Activated T-helper 1 cell treated with anti-CD3 and anti-CD28 coated beads, Interleukin-12 subunit alpha, Interleukin-12 subunit beta, Interleukin-2, Interleukin-4 antibody, amounts not matched to agents 30 ng/mL and 10 ng/mL and 1 ng/mL, durations not matched to agents 14 hours and 24 hours and 36 hours (primary cell): ENCODE measurements at regions of chrX and their contacts with region 1.

Region 1: GRCh38 chrX:79081895-79082512 is 62.5 kb upstream of the GPR174 start:
- DNase-seq: peak; percentile 5
- H3K4me3 Mint-ChIP-seq: peak overlapping the region; percentile 59
- H3K27ac Mint-ChIP-seq: peak overlapping the region; percentile 70
- H3K4me1 Mint-ChIP-seq: peaks cover 39% of the 10 kb centered on the region
- H3K27me3 Mint-ChIP-seq: no peaks in the 10 kb centered on the region

Region 2: DNA sequence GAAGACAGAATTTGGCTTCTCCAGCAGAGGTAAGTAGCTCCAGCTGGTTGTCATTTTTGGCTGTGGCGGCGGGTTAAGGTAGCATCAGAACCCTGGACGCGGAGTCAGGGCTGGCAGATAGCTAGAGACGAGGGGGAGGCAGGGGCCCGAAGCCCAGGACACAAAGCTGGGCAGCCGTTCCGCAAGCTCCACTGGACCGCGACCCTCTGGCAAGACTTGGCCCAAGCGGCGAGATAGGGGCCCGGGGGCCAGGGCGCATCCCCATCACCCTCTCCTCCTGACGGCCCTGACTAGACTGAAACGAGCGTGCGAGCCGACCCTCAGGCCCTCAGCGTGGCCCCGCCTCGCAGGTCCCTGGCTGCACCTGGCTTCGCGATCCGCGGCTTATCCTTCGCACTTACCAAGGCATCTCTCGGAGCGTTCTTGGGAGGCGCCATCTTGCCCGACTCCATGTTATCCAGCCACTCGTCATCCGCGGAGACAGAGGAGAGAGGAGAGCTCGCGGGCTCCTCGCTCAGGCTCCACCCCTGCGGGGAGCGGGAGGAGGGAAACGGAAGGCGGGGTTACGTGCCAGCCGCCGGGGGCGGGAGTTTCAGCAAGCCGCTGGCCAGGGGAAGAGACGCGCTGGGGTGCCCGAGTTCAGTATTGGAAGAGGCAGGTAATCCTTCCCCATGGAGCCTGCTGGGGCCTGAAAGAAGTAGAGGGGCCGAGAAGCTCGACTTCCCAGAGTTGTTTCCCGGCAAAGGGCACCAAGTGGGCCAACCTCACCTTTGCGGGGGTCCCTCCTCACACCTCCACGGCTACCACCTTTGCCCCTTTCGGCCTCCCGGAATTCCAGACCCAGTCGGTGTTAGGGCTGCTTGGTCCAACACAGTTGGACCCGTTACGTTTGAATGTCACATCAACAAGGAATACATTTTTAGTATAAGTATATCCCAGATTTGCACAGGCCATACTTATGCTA is 942.6 kb before region 1 on chrX and contains the start of gene TAF9B:
- intact Hi-C with region 1: loop called (anchors 10 kb)
- DNase-seq: peak; percentile 78
- H3K4me3 Mint-ChIP-seq: peak within 1 kb of the TSS; percentile 92
- H3K27ac Mint-ChIP-seq: peak within 1 kb of the TSS; percentile 86
- H3K4me1 Mint-ChIP-seq: no peaks in the 10 kb centered on the region
- H3K27me3 Mint-ChIP-seq: no peaks in the 10 kb centered on the region
- total RNA-seq, gene TAF9B: 14.9 and 15.0 TPM in 2 replicates

Region 3: GRCh38 chrX:78555401-78555980 is 526.5 kb before region 1 on chrX:
- intact Hi-C with region 1: loop called (anchors 1 kb)
- DNase-seq: no peak
- H3K4me3 Mint-ChIP-seq: no peak overlapping the region
- H3K27ac Mint-ChIP-seq: peak overlapping the region; percentile 61
- H3K4me1 Mint-ChIP-seq: peaks cover 5% of the 10 kb centered on the region
- H3K27me3 Mint-ChIP-seq: no peaks in the 10 kb centered on the region

Region 4: GRCh38 chrX:78886550-78886949 is 195.5 kb before region 1 on chrX:
- intact Hi-C with region 1: loop called (anchors 1 kb)
- DNase-seq: no peak
- H3K4me3 Mint-ChIP-seq: no peak overlapping the region
- H3K27ac Mint-ChIP-seq: no peak overlapping the region
- H3K4me1 Mint-ChIP-seq: peaks cover 9% of the 10 kb centered on the region
- H3K27me3 Mint-ChIP-seq: no peaks in the 10 kb centered on the region

Region 5: GRCh38 chrX:79146640-79147390 is 64.8 kb after region 1 on chrX:
- intact Hi-C with region 1: loop called (anchors 2 kb)
- DNase-seq: no peak
- H3K4me3 Mint-ChIP-seq: peak overlapping the region; percentile 99
- H3K27ac Mint-ChIP-seq: peak overlapping the region; percentile 94
- H3K4me1 Mint-ChIP-seq: peaks cover 53% of the 10 kb centered on the region
- H3K27me3 Mint-ChIP-seq: no peaks in the 10 kb centered on the region

Region 6: GRCh38 chrX:79270401-79270800 is 188.4 kb after region 1 on chrX:
- intact Hi-C with region 1: loop called (anchors 1 kb)
- DNase-seq: peak; percentile 44
- H3K4me3 Mint-ChIP-seq: no peak overlapping the region
- H3K27ac Mint-ChIP-seq: no peak overlapping the region
- H3K4me1 Mint-ChIP-seq: peaks cover 33% of the 10 kb centered on the region
- H3K27me3 Mint-ChIP-seq: no peaks in the 10 kb centered on the region

Region 7: DNA sequence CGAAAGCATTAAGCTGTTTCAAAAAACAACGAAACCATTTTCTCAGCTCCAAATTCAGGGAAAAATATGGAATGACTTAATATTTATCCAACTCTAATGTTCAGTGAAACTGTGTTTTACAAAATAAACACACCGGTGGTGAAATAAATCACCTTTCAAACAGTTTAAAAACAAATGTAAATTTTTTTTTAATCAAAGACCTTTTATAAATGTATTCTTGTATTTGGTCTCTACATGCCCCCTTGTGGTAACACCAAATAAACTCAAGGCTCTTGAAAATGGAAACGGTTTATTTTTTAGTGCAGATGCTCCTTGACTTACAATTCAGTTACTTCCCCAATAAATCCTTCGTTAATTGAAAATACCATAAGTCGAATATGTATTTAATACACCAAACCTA is 331.0 kb after region 1 on chrX:
- intact Hi-C with region 1: loop called (anchors 5 kb)
- DNase-seq: no peak
- H3K4me3 Mint-ChIP-seq: peak overlapping the region; percentile 71
- H3K27ac Mint-ChIP-seq: peak overlapping the region; percentile 34
- H3K4me1 Mint-ChIP-seq: peaks cover 28% of the 10 kb centered on the region
- H3K27me3 Mint-ChIP-seq: no peaks in the 10 kb centered on the region